Activated T-helper 1 cell treated with anti-CD3 and anti-CD28 coated beads, Interleukin-12 subunit alpha, Interleukin-12 subunit beta, Interleukin-2, Interleukin-4 antibody, amounts not matched to agents 30 ng/mL and 10 ng/mL and 1 ng/mL, durations not matched to agents 14 hours and 24 hours and 36 hours (primary cell): ENCODE measurements at regions of chr2 and their contacts with region 1.

Region 1: DNA sequence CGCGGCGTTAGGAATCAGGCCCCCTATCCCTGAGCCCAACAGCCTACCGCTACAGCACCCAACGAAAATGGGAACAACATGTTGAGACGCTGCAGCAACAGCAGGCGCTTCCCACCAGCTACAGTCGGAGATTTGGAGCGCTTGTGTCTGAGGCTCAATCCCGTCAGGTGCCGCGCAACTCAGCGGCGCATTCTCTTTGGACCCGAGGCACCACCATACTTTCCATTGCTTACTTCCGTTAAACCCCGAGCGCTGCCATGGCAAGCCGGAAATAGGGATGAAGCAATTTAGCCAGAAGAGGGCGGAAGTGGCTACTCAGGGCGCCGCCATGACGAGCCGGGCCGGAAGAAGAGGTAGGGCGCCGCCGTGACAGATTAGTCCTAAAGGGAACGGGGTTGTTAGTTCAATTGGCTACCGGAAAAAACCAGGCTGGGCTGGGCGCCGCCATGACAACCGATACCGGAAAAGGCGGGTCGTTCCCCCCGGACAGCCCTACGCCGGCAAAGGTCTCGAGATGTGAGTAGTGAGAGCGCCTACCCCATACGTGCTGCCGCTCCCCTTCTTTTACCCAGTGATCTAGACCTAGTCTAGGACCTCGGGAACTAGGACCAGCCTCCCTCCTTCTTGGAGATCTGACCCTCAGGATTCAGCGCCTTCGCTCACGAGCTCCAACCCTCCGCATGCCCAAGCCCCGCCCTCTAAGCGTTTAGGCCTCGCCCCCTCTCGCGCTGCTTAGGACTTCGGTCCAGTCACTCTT is at the start of gene CHCHD5:
- DNase-seq: peak; percentile 94
- H3K4me3 Mint-ChIP-seq: peak within 1 kb of the TSS; percentile 91
- H3K27ac Mint-ChIP-seq: peak within 1 kb of the TSS; percentile 99
- H3K4me1 Mint-ChIP-seq: peaks cover 38% of the 10 kb centered on the region
- H3K27me3 Mint-ChIP-seq: no peaks in the 10 kb centered on the region
- total RNA-seq, gene CHCHD5: 31.3 and 38.9 TPM in 2 replicates

Region 2: GRCh38 chr2:112054847-112055729 is 529.2 kb before region 1 on chr2 and contains the start of gene TMEM87B:
- intact Hi-C with region 1: loop called (anchors 2 kb)
- DNase-seq: peak; percentile 95
- H3K4me3 Mint-ChIP-seq: peak within 1 kb of the TSS; percentile 93
- H3K27ac Mint-ChIP-seq: peak within 1 kb of the TSS; percentile 98
- H3K4me1 Mint-ChIP-seq: peaks cover 43% of the 10 kb centered on the region
- H3K27me3 Mint-ChIP-seq: peaks cover 2% of the 10 kb centered on the region
- total RNA-seq, gene TMEM87B: 15.0 and 16.6 TPM in 2 replicates

Region 3: DNA sequence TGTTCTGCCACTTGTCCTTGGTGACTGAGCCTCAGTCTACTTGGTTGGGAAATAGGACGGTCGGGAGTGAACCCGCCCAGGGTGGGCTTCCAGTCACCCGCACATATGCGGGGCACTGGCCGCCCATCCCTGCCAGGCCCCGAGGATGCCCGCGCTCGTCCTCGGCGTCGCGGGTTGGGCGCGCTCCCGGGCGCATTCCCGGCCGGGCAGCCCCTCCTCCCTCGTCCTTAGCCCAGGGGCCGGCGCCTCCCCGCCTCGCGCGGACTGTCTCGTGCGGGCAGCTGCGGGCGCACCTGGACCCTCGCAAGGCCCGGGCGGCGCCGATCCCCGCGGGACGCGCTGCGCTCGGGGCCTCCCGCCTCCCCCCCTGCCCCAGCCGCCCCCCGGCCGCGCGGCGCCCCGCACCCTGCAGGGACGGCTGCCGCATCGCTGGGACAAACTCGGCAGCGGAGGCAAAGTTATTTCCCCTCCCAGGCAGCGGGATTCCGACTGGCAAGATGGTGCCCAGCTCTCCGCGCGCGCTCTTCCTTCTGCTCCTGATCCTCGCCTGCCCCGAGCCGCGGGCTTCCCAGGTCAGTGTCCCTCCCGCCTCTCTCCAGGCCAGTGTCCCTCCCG is 446.0 kb before region 1 on chr2 and contains the start of gene FBLN7:
- intact Hi-C with region 1: no loop called
- DNase-seq: no peak
- H3K4me3 Mint-ChIP-seq: peak within 1 kb of the TSS; percentile 72
- H3K27ac Mint-ChIP-seq: peak within 1 kb of the TSS; percentile 53
- H3K4me1 Mint-ChIP-seq: peaks cover 8% of the 10 kb centered on the region
- H3K27me3 Mint-ChIP-seq: peaks cover 24% of the 10 kb centered on the region
- total RNA-seq, gene FBLN7: 26.4 and 29.6 TPM in 2 replicates

Region 4: GRCh38 chr2:112254466-112255239 is 329.7 kb before region 1 on chr2 and contains the start of gene ZC3H8:
- intact Hi-C with region 1: loop called (anchors 1 kb)
- DNase-seq: peak; percentile 96
- H3K4me3 Mint-ChIP-seq: peak within 1 kb of the TSS; percentile 50
- H3K27ac Mint-ChIP-seq: peak within 1 kb of the TSS; percentile 91
- H3K4me1 Mint-ChIP-seq: peaks cover 27% of the 10 kb centered on the region
- H3K27me3 Mint-ChIP-seq: no peaks in the 10 kb centered on the region
- total RNA-seq, gene ZC3H8: 32.9 and 37.4 TPM in 2 replicates

Region 5: DNA sequence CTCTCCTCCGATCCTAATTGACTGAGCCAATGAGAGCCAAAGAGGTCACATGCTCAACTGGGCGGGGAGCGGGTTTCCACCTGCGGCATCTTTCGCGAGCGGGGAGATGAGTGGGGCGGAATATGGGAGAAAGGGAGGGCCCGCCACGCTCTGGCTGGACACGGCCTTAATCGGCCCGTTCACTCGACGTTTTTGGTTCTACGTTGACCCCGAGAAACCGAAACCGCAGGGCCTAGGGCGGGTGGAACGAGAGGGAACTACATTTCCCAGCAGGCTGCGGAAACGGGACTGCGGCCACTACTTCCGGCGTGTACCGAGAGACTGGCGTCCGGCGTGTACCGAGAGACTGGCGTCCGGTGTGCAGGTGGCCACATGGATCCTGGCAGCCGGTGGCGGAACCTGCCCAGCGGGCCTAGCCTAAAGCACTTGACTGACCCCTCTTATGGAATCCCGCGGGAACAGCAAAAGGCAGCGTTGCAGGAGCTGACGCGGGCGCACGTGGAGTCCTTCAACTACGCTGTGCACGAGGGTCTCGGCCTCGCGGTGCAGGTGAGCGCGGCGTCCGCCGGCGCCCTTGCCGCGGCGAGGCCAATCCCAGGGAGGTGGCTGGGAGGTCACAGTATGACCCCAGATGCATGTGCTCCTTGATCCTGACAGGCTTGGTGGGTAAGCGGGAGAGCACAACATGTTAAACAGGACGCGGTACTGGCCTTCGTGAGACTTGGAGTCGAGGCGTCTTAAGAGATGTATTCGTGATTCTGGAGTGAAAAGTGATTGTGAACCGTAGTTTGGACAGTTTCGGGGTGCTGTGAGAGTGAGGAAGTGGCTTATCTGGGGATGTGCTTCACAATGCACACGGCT is 42.0 kb before region 1 on chr2 and contains the start of gene POLR1B:
- intact Hi-C with region 1: loop called (anchors 1 kb)
- DNase-seq: peak; percentile 77
- H3K4me3 Mint-ChIP-seq: no peak within 1 kb of the TSS
- H3K27ac Mint-ChIP-seq: no peak within 1 kb of the TSS
- H3K4me1 Mint-ChIP-seq: peaks cover 11% of the 10 kb centered on the region
- H3K27me3 Mint-ChIP-seq: no peaks in the 10 kb centered on the region
- total RNA-seq, gene POLR1B: 75.6 and 78.4 TPM in 2 replicates

Region 6: DNA sequence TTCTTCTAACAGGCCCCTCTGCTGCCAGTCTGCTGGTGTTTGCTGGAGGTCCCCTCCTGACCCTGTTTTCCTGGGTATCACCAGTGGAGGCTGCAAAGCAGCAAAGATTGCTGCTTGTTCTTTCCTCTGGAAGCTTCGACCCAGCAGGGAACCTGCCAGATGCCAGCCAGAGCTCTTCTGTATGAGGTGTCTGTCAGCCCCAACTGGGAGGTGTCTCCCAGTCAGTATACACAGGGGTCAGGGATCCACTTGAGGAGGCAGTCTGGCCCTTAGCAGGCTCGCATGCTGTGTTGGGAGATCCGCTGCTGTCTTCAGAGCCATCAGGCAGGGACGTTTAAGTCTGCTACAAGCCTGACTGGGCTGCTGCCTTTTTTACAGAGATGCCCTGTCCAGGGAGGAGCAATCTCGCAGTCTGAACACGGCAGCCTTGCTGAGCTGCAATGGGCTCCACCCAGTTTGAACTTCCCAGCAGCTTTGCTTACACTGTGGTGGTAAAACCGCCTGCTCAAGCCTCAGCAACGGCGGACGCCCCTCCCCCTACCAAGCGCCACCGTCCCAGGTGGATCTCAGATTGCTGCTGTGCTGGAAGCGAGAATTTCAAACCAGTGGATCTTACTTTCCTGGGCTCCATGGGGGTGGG is 30.0 kb after region 1 on chr2:
- intact Hi-C with region 1: no loop called
- DNase-seq: no peak
- H3K4me3 Mint-ChIP-seq: no peak overlapping the region
- H3K27ac Mint-ChIP-seq: no peak overlapping the region
- H3K4me1 Mint-ChIP-seq: no peaks in the 10 kb centered on the region
- H3K27me3 Mint-ChIP-seq: peaks cover 37% of the 10 kb centered on the region

Region 7: GRCh38 chr2:112645310-112646101 is 61.2 kb after region 1 on chr2 and contains the start of gene SLC20A1:
- intact Hi-C with region 1: loop called (anchors 1 kb)
- DNase-seq: peak; percentile 99
- H3K4me3 Mint-ChIP-seq: peak within 1 kb of the TSS; percentile 98
- H3K27ac Mint-ChIP-seq: peak within 1 kb of the TSS; percentile 92
- H3K4me1 Mint-ChIP-seq: peaks cover 72% of the 10 kb centered on the region
- H3K27me3 Mint-ChIP-seq: no peaks in the 10 kb centered on the region
- total RNA-seq, gene SLC20A1: 164 and 172 TPM in 2 replicates